CD8-positive, alpha-beta T cell (primary cell): ENCODE measurements at regions of chr19 and their contacts with region 1.

Region 1: GRCh38 chr19:49224856-49225255 is 67.3 kb downstream of the TRPM4 start:
- DNase-seq: peak in 2 of 9 experiments; percentile 26 to 28
- ATAC-seq: no peak
- H3K4me3 ChIP-seq: no peak overlapping the region
- H3K4me3 Mint-ChIP-seq: no peak overlapping the region
- H3K27ac ChIP-seq: no peak overlapping the region
- H3K27ac Mint-ChIP-seq: no peak overlapping the region
- H3K4me1 ChIP-seq: peaks cover 8% of the 10 kb centered on the region
- H3K4me1 Mint-ChIP-seq: peaks cover 4% of the 10 kb centered on the region
- H3K27me3 ChIP-seq: no peaks in the 10 kb centered on the region
- H3K27me3 Mint-ChIP-seq: peaks cover 12% of the 10 kb centered on the region
- CTCF ChIP-seq: no peak

Region 2: GRCh38 chr19:49182848-49183344 is 42.0 kb before region 1 on chr19:
- CTCF ChIA-PET with region 1: no interaction called
- POLR2A ChIA-PET with region 1: no interaction called
- intact Hi-C with region 1: no loop called
- DNase-seq: no peak
- ATAC-seq: no peak
- H3K4me3 ChIP-seq: no peak overlapping the region
- H3K4me3 Mint-ChIP-seq: no peak overlapping the region
- H3K27ac ChIP-seq: no peak overlapping the region
- H3K27ac Mint-ChIP-seq: no peak overlapping the region
- H3K4me1 ChIP-seq: no peaks in the 10 kb centered on the region
- H3K4me1 Mint-ChIP-seq: no peaks in the 10 kb centered on the region
- H3K27me3 ChIP-seq: no peaks in the 10 kb centered on the region
- H3K27me3 Mint-ChIP-seq: peaks cover 7% of the 10 kb centered on the region
- CTCF ChIP-seq: no peak

Region 3: GRCh38 chr19:49210108-49210900 is 14.6 kb before region 1 on chr19:
- CTCF ChIA-PET with region 1: interaction called, 21 read pairs
- POLR2A ChIA-PET with region 1: no interaction called
- intact Hi-C with region 1: no loop called
- DNase-seq: peak in 5 of 9 experiments; percentile 18 to 59 (median 46)
- ATAC-seq: peak; percentile 71
- H3K4me3 ChIP-seq: no peak overlapping the region
- H3K4me3 Mint-ChIP-seq: no peak overlapping the region
- H3K27ac ChIP-seq: no peak overlapping the region
- H3K27ac Mint-ChIP-seq: no peak overlapping the region
- H3K4me1 ChIP-seq: no peaks in the 10 kb centered on the region
- H3K4me1 Mint-ChIP-seq: peaks cover 10% of the 10 kb centered on the region
- H3K27me3 ChIP-seq: no peaks in the 10 kb centered on the region
- H3K27me3 Mint-ChIP-seq: peaks cover 15% of the 10 kb centered on the region
- CTCF ChIP-seq: no peak

Region 4: DNA sequence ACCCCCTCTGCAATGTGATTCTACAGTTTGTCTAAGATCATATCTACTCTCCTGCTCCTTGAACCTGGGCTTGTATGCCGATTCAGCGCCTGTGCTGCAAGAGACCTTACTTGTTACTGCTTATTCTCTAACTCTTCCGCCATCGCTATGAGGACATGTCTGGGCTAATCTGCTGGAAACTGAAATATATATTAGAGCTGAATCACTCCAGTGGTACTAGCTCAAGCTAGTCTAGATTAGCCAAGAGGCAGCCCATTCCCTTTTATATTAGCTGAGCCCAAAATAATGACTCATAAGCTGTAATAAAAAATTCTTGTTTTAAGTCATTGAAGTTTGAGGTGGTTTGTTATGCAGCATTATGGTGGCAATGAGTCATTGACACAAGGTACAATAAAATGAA is 47.3 kb after region 1 on chr19:
- CTCF ChIA-PET with region 1: no interaction called
- POLR2A ChIA-PET with region 1: no interaction called
- intact Hi-C with region 1: no loop called
- DNase-seq: no peak
- ATAC-seq: no peak
- H3K4me3 ChIP-seq: no peak overlapping the region
- H3K4me3 Mint-ChIP-seq: no peak overlapping the region
- H3K27ac ChIP-seq: no peak overlapping the region
- H3K27ac Mint-ChIP-seq: no peak overlapping the region
- H3K4me1 ChIP-seq: no peaks in the 10 kb centered on the region
- H3K4me1 Mint-ChIP-seq: no peaks in the 10 kb centered on the region
- H3K27me3 ChIP-seq: no peaks in the 10 kb centered on the region
- H3K27me3 Mint-ChIP-seq: peaks cover 13% of the 10 kb centered on the region
- CTCF ChIP-seq: no peak

Region 5: DNA sequence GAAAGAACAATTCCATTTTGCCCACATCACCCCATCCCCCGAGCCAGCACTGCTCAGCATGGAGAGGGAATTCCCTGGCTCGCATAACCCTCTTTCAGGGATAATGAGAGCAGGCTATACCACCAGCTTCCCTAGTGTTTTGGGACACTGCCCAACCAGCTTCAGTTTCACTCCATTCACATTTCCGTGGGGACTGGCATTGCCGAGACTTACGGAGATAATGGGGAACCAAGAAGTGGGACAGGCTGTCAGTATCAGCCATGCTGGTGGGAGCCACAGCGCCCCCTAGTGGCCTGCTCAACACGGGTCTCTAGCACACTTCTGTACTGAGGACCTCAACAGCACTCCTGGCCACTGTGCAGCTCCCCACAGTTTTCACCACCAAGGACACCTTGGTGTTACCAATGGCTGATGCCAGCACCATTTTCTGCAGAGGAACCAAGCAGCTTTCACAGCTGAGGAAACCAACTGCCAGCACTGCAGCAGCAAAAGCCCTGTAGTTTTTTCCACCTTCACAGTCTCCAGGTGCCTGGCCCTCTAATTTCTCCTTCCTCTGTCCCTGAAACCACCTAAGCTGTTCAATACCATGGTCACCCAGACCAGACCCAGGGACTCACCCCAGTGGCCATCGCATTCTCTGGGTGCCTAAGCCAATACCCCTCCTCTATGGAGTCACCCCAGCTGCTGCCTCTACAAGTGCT is 76.5 kb after region 1 on chr19:
- CTCF ChIA-PET with region 1: interaction called, 4 read pairs
- POLR2A ChIA-PET with region 1: no interaction called
- intact Hi-C with region 1: loop called in 1 of 2 experiments (anchors 2 kb)
- DNase-seq: peak; percentile 58 to 86 (median 82)
- ATAC-seq: peak; percentile 83
- H3K4me3 ChIP-seq: no peak overlapping the region
- H3K4me3 Mint-ChIP-seq: no peak overlapping the region
- H3K27ac ChIP-seq: no peak overlapping the region
- H3K27ac Mint-ChIP-seq: no peak overlapping the region
- H3K4me1 ChIP-seq: peaks cover 5% of the 10 kb centered on the region
- H3K4me1 Mint-ChIP-seq: peaks cover 8% of the 10 kb centered on the region
- H3K27me3 ChIP-seq: no peaks in the 10 kb centered on the region
- H3K27me3 Mint-ChIP-seq: no peaks in the 10 kb centered on the region
- CTCF ChIP-seq: peak; percentile 88

Region 6: DNA sequence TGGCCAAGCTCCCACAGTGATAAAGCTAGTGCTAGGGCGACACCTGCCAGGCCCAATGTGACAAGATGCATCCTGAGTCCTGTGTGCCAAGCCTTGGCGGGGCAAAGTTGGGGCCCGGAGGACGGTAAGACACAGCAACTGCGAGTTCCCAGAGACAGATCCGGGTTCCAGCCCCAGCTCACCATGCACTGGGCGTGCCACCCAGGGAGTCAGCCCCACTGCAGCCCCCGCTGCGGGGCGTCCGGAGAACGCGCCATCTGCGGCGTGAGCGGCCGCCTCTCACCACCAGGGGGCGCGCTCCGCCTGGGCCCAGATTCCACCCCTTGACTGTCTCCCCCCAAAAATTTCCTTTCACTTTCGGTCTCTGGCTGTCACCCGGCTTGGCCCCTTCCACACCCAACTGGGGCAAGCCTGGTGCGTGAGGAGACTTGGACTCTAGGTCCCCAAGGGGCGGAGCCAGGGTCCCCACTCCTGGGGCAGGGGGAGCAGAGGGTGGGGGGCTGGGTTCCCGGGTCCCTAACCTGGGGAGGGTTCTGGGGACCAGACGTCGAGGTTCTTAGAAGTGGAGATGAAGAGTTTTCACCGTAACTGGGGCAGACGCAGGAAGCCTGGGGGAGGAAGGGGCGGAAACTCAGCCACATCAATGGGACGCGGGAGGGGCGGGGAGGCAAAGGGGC is 249.2 kb after region 1 on chr19 and contains the start of gene FLT3LG:
- CTCF ChIA-PET with region 1: interaction called, 3 read pairs
- POLR2A ChIA-PET with region 1: no interaction called
- intact Hi-C with region 1: loop called (anchors 1 to 10 kb)
- DNase-seq: peak; percentile 83 to 97 (median 91)
- ATAC-seq: peak; percentile 58
- H3K4me3 ChIP-seq: peak within 1 kb of the TSS; percentile 88 to 98
- H3K4me3 Mint-ChIP-seq: peak within 1 kb of the TSS; percentile 91
- H3K27ac ChIP-seq: peak within 1 kb of the TSS; percentile 92 to 96
- H3K27ac Mint-ChIP-seq: peak within 1 kb of the TSS; percentile 98
- H3K4me1 ChIP-seq: peaks cover 53% of the 10 kb centered on the region
- H3K4me1 Mint-ChIP-seq: peaks cover 54% of the 10 kb centered on the region
- H3K27me3 ChIP-seq: no peaks in the 10 kb centered on the region
- H3K27me3 Mint-ChIP-seq: no peaks in the 10 kb centered on the region
- CTCF ChIP-seq: peak; percentile 83
- total RNA-seq, gene FLT3LG: 246 to 259 TPM

Region 7: GRCh38 chr19:49520705-49521319 is 296.0 kb after region 1 on chr19:
- CTCF ChIA-PET with region 1: no interaction called
- POLR2A ChIA-PET with region 1: no interaction called
- intact Hi-C with region 1: no loop called
- DNase-seq: no peak
- ATAC-seq: no peak
- H3K4me3 ChIP-seq: no peak overlapping the region
- H3K4me3 Mint-ChIP-seq: no peak overlapping the region
- H3K27ac ChIP-seq: no peak overlapping the region
- H3K27ac Mint-ChIP-seq: no peak overlapping the region
- H3K4me1 ChIP-seq: no peaks in the 10 kb centered on the region
- H3K4me1 Mint-ChIP-seq: peaks cover 5% of the 10 kb centered on the region
- H3K27me3 ChIP-seq: no peaks in the 10 kb centered on the region
- H3K27me3 Mint-ChIP-seq: no peaks in the 10 kb centered on the region
- CTCF ChIP-seq: no peak